ENCODE measurements at regions of chr9 and their contacts with region 1.

Region 1: GRCh38 chr9:70470050-70471015 is 55.9 kb upstream of the KLF9 start:
- DNase-seq: no peak
- H3K4me3 ChIP-seq: no peak overlapping the region
- H3K27ac ChIP-seq: peak overlapping the region; percentile 64 to 74 (median 69)
- H3K4me1 ChIP-seq: peaks cover 0 to 60% (median 41%) of the 10 kb centered on the region in 4 donors
- H3K27me3 ChIP-seq: no peaks in the 10 kb centered on the region
- CTCF ChIP-seq: no peak
- EP300 ChIP-seq: no peak
- POLR2A ChIP-seq: peak in 1 of 2 donors; percentile 19

Region 2: DNA sequence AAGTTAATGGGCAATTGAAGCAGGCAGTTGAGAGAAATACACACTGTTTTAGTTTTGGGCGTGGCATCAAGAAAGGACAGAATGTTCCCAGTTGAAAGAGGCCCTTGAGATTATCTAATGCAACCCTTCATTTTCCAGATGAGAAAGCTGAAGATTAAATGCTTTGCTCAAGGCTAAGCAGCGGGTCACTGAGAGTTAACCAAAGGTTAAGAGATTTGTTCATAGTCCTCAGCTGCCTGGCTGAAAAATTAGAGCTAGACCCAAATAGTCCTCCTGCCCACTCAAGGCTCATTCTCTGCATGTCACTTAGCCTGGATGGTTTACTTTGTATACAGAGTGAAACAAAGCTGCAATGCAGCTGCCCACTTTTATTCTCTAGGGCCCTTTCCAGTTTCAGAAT is 473.4 kb before region 1 on chr9:
- intact Hi-C with region 1: no loop called
- DNase-seq: no peak
- H3K4me3 ChIP-seq: no peak overlapping the region
- H3K27ac ChIP-seq: peak overlapping the region in 3 of 4 donors; percentile 26 to 72 (median 30)
- H3K4me1 ChIP-seq: no peaks in the 10 kb centered on the region
- H3K27me3 ChIP-seq: no peaks in the 10 kb centered on the region
- CTCF ChIP-seq: no peak
- EP300 ChIP-seq: peak in 2 of 4 donors; percentile 15 to 42
- POLR2A ChIP-seq: no peak

Region 3: DNA sequence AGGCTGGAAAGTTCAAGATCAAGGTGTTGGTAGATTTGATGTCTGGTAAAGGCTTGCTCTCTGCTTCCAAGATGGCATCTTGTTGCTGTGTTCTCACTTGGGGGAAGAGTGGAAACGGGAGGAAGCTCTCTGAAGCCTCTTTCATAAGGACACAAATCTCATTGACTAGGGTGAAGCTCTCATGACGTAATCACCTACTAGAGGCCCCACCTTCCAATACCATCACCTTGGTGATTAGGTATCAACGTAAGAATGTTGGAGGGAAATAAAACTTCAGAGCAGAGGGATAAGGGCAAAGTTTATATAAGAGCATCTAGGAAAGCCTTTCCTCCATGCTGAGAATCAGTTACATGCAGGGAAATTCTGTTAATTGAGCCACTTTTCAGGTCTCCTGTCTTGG is 40.4 kb before region 1 on chr9:
- intact Hi-C with region 1: loop called (anchors 2 kb)
- DNase-seq: no peak
- H3K4me3 ChIP-seq: no peak overlapping the region
- H3K27ac ChIP-seq: no peak overlapping the region
- H3K4me1 ChIP-seq: peaks cover 0 to 14% (median 12%) of the 10 kb centered on the region in 4 donors
- H3K27me3 ChIP-seq: no peaks in the 10 kb centered on the region
- CTCF ChIP-seq: no peak
- EP300 ChIP-seq: no peak
- POLR2A ChIP-seq: no peak

Region 4: GRCh38 chr9:70789086-70789485 is 318.8 kb after region 1 on chr9:
- intact Hi-C with region 1: no loop called
- DNase-seq: no peak
- H3K4me3 ChIP-seq: no peak overlapping the region
- H3K27ac ChIP-seq: no peak overlapping the region
- H3K4me1 ChIP-seq: no peaks in the 10 kb centered on the region
- H3K27me3 ChIP-seq: no peaks in the 10 kb centered on the region
- CTCF ChIP-seq: no peak
- EP300 ChIP-seq: no peak
- POLR2A ChIP-seq: no peak

Measured in sigmoid colon (tissue), 7 donors.